SK-N-SH (cell line): ENCODE measurements at regions of chr16 and their contacts with region 1.

Region 1: GRCh38 chr16:2429034-2429770 is at the start of gene CCNF:
- DNase-seq: peak; percentile 100
- H3K4me3 ChIP-seq: peak within 1 kb of the TSS; percentile 89 to 94
- H3K27ac ChIP-seq: peak within 1 kb of the TSS; percentile 13 to 86; a peak in 3 of 4 replicates
- H3K4me1 ChIP-seq: peaks cover 10 to 31% of the 10 kb centered on the region in 2 experiments
- H3K27me3 ChIP-seq: no peaks in the 10 kb centered on the region
- CTCF ChIP-seq: peak; percentile 8; the same call in 1 of the 2 replicates
- EP300 ChIP-seq: no peak
- RAD21 ChIP-seq: no peak
- polyA plus RNA-seq, gene CCNF: 3.8 and 4.6 TPM in 2 replicates

Region 2: DNA sequence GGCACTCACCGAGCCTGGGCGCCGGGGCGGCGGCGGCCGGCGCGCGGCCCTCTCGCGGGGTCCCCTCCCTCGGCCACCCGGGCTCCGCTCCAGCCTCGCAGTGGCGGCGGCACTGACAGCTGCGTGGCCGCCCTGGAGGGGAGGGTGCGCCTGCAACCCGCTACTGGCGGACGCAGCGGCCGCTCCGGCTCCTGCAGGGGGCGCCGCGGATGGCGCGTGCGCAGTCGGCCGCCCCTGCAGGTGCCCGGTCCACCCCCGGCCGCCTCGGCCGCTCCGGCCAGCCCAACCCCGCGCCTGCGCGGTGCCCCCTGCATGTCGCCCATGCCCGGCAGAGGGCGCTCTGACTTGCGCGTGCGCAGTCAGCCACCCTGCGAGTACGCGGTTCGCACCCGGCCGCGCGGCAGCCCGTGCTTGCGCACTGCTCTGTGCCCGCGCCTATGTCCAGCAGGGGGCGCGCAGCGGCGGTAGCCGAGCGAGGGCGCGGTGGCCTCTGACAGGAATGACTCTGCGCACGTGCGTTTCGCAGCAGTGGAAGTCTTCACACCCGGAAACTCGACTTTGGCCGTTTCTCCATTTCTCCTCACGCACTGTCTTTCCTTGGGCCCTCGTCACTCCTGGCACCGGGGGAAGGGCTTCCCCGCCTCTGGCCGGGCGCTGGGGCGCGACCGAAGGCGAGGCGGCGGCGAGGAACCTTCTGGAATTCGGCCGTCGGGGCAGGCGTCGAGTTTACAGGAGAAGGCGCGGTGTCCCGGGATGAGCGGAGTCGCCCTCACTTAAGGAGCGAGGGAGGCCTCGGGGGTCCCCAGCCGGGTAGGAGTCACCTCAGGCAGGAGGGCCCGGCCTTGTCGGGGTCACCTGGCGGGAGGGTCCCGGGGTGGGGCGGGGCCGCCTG is 88.4 kb before region 1 on chr16 and contains the start of gene ABCA3:
- CTCF ChIA-PET with region 1: interaction called, 14 read pairs
- POLR2A ChIA-PET with region 1: interaction called, 7 read pairs
- DNase-seq: peak; percentile 100
- H3K4me3 ChIP-seq: peak within 1 kb of the TSS; percentile 76 to 82
- H3K27ac ChIP-seq: peak within 1 kb of the TSS in 1 of 2 experiments; percentile 80; a peak in 2 of 4 replicates
- H3K4me1 ChIP-seq: peaks cover 0 to 20% of the 10 kb centered on the region in 2 experiments; a peak in 2 of 4 replicates
- H3K27me3 ChIP-seq: no peaks in the 10 kb centered on the region
- CTCF ChIP-seq: peak; percentile 96
- EP300 ChIP-seq: no peak
- RAD21 ChIP-seq: peak; percentile 81
- polyA plus RNA-seq, gene ABCA3: 6.9 and 9.9 TPM in 2 replicates

Region 3: GRCh38 chr16:2439598-2439997 is 10.4 kb after region 1 on chr16:
- CTCF ChIA-PET with region 1: interaction called, 16 read pairs
- POLR2A ChIA-PET with region 1: no interaction called
- DNase-seq: no peak
- H3K4me3 ChIP-seq: no peak overlapping the region
- H3K27ac ChIP-seq: no peak overlapping the region
- H3K4me1 ChIP-seq: no peaks in the 10 kb centered on the region
- H3K27me3 ChIP-seq: no peaks in the 10 kb centered on the region
- CTCF ChIP-seq: no peak
- EP300 ChIP-seq: no peak
- RAD21 ChIP-seq: no peak

Region 4: DNA sequence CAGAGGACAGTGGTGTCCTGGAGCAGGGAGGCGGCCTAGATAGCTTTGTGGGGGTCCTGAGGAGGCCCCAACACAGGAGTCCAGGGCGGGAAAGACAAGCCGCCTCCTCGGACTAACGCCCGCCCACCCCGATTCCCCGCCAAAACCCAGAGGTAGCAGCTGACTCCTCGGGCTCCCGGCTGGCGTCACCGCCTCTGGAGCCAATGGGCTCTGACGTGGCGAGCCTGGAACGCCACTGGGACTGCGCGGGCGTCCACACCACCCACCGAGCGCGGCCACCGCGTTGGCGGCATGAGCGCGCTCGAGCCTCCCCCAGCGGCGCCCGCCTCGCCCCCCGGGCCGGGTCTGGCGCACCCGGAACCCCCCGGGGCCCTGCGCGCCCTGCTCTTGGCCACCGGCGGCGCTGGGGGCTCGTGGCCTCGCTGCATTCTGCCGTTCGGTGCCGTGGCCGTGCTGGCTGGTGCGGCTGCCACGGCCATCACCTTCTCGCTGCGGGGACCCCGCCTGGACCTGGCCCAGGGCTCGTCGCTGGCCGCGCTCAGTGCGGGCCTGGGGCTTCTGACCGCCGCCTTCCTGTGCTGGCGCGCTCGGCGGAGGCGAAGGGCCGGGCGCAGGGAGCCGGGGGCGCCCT is 38.4 kb after region 1 on chr16:
- CTCF ChIA-PET with region 1: interaction called, 15 read pairs
- POLR2A ChIA-PET with region 1: no interaction called
- DNase-seq: peak; percentile 89
- H3K4me3 ChIP-seq: peak overlapping the region; percentile 51 to 57
- H3K27ac ChIP-seq: peak overlapping the region in 1 of 2 experiments; percentile 97; a peak in 2 of 4 replicates
- H3K4me1 ChIP-seq: peaks cover 6 to 55% of the 10 kb centered on the region in 2 experiments; a peak in 3 of 4 replicates
- H3K27me3 ChIP-seq: no peaks in the 10 kb centered on the region
- CTCF ChIP-seq: no peak; the same call in 1 of the 2 replicates
- EP300 ChIP-seq: no peak
- RAD21 ChIP-seq: 0 out of 2 replicates have a peak, but pooled peaks have one; percentile 8

Region 5: GRCh38 chr16:2486645-2487516 is 57.7 kb after region 1 on chr16:
- CTCF ChIA-PET with region 1: interaction called, 13 read pairs
- POLR2A ChIA-PET with region 1: interaction called, 3 read pairs
- DNase-seq: no peak
- H3K4me3 ChIP-seq: no peak overlapping the region
- H3K27ac ChIP-seq: no peak overlapping the region
- H3K4me1 ChIP-seq: peaks cover 3 to 41% of the 10 kb centered on the region in 2 experiments; a peak in 3 of 4 replicates
- H3K27me3 ChIP-seq: no peaks in the 10 kb centered on the region
- CTCF ChIP-seq: no peak
- EP300 ChIP-seq: no peak
- RAD21 ChIP-seq: no peak